AG04449 (cell line): ENCODE measurements at regions of chr1 and their contacts with region 1.

Region 1: DNA sequence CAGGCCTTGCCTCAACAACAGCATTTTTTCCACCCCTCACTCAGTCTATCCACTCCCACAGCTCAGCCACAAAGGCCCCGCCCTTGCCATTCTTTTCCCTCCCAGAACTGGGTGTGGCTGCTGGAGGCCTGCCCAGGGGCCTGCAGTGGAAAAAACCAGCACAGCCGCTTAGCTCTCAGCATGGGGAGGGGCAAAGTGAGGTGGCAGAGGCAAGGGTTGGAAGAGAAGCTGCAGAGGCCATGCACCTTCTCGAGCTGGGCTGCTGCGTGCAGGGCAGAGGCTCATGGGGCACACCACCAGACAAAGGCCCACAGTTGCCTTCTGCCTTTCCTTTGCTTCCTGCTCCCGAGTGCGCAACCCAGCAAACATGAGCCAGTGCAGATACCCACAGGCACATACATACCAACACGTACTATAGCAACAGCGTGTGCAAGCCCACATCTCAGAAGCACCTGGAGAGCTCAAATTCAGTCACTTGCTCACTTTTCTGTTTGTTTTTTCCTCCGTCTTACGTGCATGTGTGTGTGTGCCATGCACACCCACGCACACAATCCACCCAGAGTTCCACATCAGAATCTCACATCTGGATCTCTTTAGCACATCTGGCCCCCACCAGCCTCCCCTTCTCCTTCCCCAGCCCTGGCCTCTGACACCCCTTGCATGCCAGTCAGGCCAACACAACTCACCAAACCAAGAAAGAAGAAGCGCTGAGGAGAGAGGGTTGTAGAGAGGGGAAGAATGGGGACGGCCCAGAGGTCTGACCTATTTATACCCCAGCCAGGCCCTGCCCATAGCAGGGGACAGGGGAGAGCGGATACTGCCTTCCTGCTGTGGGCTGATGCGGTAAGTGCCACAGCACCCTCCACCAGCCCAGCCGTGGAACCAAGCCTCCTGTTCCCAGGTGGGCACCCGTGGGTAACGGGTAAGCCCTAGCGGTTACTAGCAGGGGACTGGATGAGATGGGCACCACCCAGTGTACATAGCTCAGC is at the start of gene S100A4:
- DNase-seq: peak; percentile 65
- H3K4me3 ChIP-seq: peak within 1 kb of the TSS; percentile 56
- CTCF ChIP-seq: no peak

Region 2: GRCh38 chr1:153566440-153567379 is 21.3 kb after region 1 on chr1:
- CTCF ChIA-PET with region 1: interaction called, 92 read pairs
- POLR2A ChIA-PET with region 1: interaction called, 28 read pairs
- DNase-seq: peak; percentile 91
- H3K4me3 ChIP-seq: peak overlapping the region; percentile 23
- CTCF ChIP-seq: no peak